Pancreas (tissue), 10 donors: ENCODE measurements at regions of chr3 and their contacts with region 1.

Region 1: DNA sequence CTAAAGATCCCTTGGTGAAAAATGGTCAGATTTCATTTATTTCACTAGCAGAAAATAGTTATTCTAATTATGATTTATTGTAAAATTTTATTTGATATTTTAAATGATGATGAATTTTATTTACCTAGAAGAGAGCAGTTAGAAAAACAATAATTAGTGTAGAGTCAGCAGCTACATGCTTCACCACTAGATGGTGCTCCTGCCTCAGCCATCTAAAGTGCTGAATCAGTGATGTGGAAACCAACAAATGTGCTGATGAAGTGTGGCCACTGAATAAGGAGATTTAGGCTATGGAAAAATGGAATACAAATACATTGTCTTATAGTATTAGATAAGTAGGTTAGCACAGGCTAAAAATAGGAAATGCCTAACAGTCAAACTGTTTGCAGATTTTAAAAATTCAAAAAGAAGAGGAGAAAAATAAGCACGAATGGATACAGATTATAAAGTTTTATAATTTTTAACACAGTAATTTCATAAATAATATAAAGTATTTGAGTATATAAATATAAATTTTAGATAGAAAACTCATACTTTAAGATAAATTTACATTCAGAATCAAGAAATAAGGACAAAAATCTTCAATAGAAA is 109.8 kb downstream of the PPP2R3A start:
- DNase-seq: peak in 5 of 6 donors; percentile 39 to 78 (median 56)
- ATAC-seq: peak; percentile 87 to 98 (median 96)
- H3K4me3 ChIP-seq: no peak overlapping the region
- H3K27ac ChIP-seq: no peak overlapping the region
- H3K4me1 ChIP-seq: no peaks in the 10 kb centered on the region
- H3K27me3 ChIP-seq: no peaks in the 10 kb centered on the region
- CTCF ChIP-seq: peak; percentile 75 to 86 (median 78)

Region 2: GRCh38 chr3:136209921-136210320 is 134.6 kb after region 1 on chr3:
- intact Hi-C with region 1: no loop called
- DNase-seq: no peak
- ATAC-seq: no peak
- H3K4me3 ChIP-seq: no peak overlapping the region
- H3K27ac ChIP-seq: no peak overlapping the region
- H3K4me1 ChIP-seq: no peaks in the 10 kb centered on the region
- H3K27me3 ChIP-seq: no peaks in the 10 kb centered on the region
- CTCF ChIP-seq: no peak

Region 3: GRCh38 chr3:136249593-136250225 is 174.4 kb after region 1 on chr3:
- intact Hi-C with region 1: loop called in 1 of 3 experiments (anchors 5 kb)
- DNase-seq: peak in 1 of 6 donors; percentile 12
- ATAC-seq: no peak
- H3K4me3 ChIP-seq: peak overlapping the region; percentile 43 to 87 (median 60)
- H3K27ac ChIP-seq: peak overlapping the region; percentile 88 to 92 (median 90)
- H3K4me1 ChIP-seq: peaks cover 0 to 9% (median 6%) of the 10 kb centered on the region in 3 donors
- H3K27me3 ChIP-seq: no peaks in the 10 kb centered on the region
- CTCF ChIP-seq: no peak

Region 4: GRCh38 chr3:136752422-136753325 is 677.4 kb after region 1 on chr3:
- intact Hi-C with region 1: loop called in 1 of 3 experiments (anchors 10 kb)
- DNase-seq: peak; percentile 98 to 100 (median 99)
- ATAC-seq: peak; percentile 87 to 95 (median 91)
- H3K4me3 ChIP-seq: peak overlapping the region; percentile 36 to 84 (median 75)
- H3K27ac ChIP-seq: peak overlapping the region; percentile 96 to 99 (median 97)
- H3K4me1 ChIP-seq: peaks cover 15 to 26% (median 15%) of the 10 kb centered on the region in 3 donors
- H3K27me3 ChIP-seq: no peaks in the 10 kb centered on the region
- CTCF ChIP-seq: peak in 2 of 4 donors; percentile 0 to 90

Region 5: GRCh38 chr3:137013955-137014688 is 938.8 kb after region 1 on chr3:
- intact Hi-C with region 1: loop called in 2 of 3 experiments (anchors 5 kb)
- DNase-seq: peak; percentile 81 to 98 (median 92)
- ATAC-seq: peak; percentile 99
- H3K4me3 ChIP-seq: peak overlapping the region in 3 of 4 donors; percentile 22 to 44 (median 43)
- H3K27ac ChIP-seq: peak overlapping the region in 2 of 4 donors; percentile 41 to 56
- H3K4me1 ChIP-seq: no peaks in the 10 kb centered on the region
- H3K27me3 ChIP-seq: no peaks in the 10 kb centered on the region
- CTCF ChIP-seq: peak; percentile 82 to 91 (median 88)